ENCODE measurements at regions of chr10 and their contacts with region 1.

Region 1: DNA sequence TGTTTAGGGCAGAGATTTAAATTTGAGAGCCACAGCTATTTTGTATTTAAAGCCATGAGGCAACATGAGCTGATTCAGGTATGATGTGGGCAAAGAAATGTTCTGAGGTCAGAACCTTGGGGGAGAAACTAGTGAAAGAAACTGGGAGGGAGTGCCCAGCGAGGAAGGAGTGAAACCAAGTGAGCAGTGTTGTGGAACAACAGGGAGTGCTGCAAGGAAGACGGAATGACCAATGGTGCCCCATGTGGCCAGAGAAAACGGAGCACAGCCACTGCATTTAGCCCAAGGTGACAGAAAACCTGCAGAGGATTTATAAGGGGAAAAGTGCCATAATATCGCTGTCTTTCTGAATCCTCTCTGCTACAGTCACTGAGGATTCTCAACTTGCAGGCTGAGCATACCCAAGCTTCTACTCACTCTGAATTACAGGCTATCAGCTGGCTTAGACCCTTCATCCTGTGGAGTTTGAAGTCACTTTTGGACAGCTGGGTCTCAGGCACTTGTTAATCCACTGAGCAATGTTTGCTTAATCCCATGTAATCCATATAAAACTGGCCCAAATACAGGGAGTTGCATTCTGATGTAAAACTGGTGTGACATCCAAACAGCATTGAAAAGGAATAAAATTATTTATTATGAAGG is 777.3 kb downstream of the CCSER2 start:
- DNase-seq: no peak
- ATAC-seq: peak; percentile 18; the same call in 1 of the 3 replicates
- H3K4me3 ChIP-seq: no peak overlapping the region
- H3K27ac ChIP-seq: no peak overlapping the region
- H3K4me1 ChIP-seq: no peaks in the 10 kb centered on the region
- H3K27me3 ChIP-seq: no peaks in the 10 kb centered on the region
- CTCF ChIP-seq: no peak
- EP300 ChIP-seq: no peak
- POLR2A ChIP-seq: no peak
- RAD21 ChIP-seq: no peak

Region 2: GRCh38 chr10:84925495-84925894 is 180.2 kb before region 1 on chr10:
- CTCF ChIA-PET with region 1: no interaction called
- POLR2A ChIA-PET with region 1: no interaction called
- RAD21 ChIA-PET with region 1: no interaction called
- SMC1A ChIA-PET with region 1: no interaction called
- in situ Hi-C with region 1: no loop called
- intact Hi-C with region 1: loop called (anchors 5 kb)
- DNase-seq: no peak
- ATAC-seq: no peak
- H3K4me3 ChIP-seq: no peak overlapping the region
- H3K27ac ChIP-seq: no peak overlapping the region
- H3K4me1 ChIP-seq: no peaks in the 10 kb centered on the region
- H3K27me3 ChIP-seq: no peaks in the 10 kb centered on the region
- CTCF ChIP-seq: no peak
- EP300 ChIP-seq: no peak
- POLR2A ChIP-seq: no peak
- RAD21 ChIP-seq: no peak

Region 3: GRCh38 chr10:84935772-84936171 is 170.0 kb before region 1 on chr10:
- CTCF ChIA-PET with region 1: no interaction called
- POLR2A ChIA-PET with region 1: no interaction called
- RAD21 ChIA-PET with region 1: no interaction called
- SMC1A ChIA-PET with region 1: no interaction called
- in situ Hi-C with region 1: no loop called
- intact Hi-C with region 1: no loop called
- DNase-seq: no peak
- ATAC-seq: no peak
- H3K4me3 ChIP-seq: no peak overlapping the region
- H3K27ac ChIP-seq: no peak overlapping the region
- H3K4me1 ChIP-seq: no peaks in the 10 kb centered on the region
- H3K27me3 ChIP-seq: no peaks in the 10 kb centered on the region
- CTCF ChIP-seq: no peak
- EP300 ChIP-seq: no peak
- POLR2A ChIP-seq: no peak
- RAD21 ChIP-seq: no peak

Measured in GM12878 (cell line).